ENCODE measurements at regions of chr7 and their contacts with region 1.

Region 1: DNA sequence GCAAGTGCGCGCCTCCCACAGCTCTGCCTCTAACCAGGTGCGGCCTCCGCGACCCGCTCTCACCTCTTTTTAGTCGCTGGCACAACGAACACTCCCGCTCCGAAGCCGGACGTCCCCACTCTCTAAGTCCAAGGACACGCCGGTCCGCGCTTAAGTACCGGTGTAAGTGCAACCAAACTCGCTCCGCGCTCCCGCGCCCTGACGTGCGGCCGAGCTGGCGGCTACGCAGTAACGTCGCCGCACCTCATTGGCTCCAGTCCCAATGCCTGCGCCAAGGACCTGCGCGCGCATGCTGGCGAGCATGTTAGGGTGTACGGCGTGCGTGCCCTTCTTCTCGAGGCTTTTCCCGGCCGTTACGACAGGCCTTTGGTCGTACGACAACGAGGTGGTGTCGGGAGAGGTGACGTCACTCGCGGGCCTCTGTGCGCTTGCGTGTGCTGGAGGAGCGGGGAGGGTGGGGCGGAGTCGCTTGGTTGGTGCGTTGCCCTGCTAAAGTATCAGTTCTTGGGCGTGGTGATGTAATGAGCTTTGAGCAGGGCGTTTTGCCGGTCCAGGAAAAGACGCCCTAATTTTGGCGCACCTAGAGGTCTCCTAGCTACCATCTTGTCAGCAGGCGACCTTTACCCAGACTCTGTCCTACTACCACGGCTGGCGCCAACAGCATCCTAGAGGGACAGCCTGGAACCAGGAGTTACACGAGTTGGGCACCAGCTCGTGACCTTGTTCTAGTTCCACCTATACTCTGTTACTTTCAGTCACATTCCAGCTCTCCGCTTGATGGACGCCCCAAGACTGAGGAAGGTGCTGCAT is at the start of gene CYCS:
- DNase-seq: peak; percentile 100
- H3K4me3 ChIP-seq: peak within 1 kb of the TSS; percentile 82 to 98 (median 91)
- H3K27ac ChIP-seq: peak within 1 kb of the TSS; percentile 67
- H3K4me1 ChIP-seq: peaks cover 9% of the 10 kb centered on the region
- H3K27me3 ChIP-seq: peaks cover 0 to 3% of the 10 kb centered on the region in 2 experiments
- CTCF ChIP-seq: no peak
- POLR2A ChIP-seq: peak; percentile 98
- total RNA-seq, gene CYCS: 134 and 143 TPM in 2 replicates

Region 2: GRCh38 chr7:25158966-25159365 is 33.6 kb after region 1 on chr7:
- CTCF ChIA-PET with region 1: interaction called, 4 read pairs
- POLR2A ChIA-PET with region 1: no interaction called
- dilution Hi-C with region 1: no loop called
- intact Hi-C with region 1: loop called (anchors 1 kb)
- DNase-seq: no peak
- H3K4me3 ChIP-seq: no peak overlapping the region
- H3K27ac ChIP-seq: no peak overlapping the region
- H3K4me1 ChIP-seq: no peaks in the 10 kb centered on the region
- H3K27me3 ChIP-seq: no peaks in the 10 kb centered on the region
- CTCF ChIP-seq: no peak
- POLR2A ChIP-seq: no peak

Region 3: DNA sequence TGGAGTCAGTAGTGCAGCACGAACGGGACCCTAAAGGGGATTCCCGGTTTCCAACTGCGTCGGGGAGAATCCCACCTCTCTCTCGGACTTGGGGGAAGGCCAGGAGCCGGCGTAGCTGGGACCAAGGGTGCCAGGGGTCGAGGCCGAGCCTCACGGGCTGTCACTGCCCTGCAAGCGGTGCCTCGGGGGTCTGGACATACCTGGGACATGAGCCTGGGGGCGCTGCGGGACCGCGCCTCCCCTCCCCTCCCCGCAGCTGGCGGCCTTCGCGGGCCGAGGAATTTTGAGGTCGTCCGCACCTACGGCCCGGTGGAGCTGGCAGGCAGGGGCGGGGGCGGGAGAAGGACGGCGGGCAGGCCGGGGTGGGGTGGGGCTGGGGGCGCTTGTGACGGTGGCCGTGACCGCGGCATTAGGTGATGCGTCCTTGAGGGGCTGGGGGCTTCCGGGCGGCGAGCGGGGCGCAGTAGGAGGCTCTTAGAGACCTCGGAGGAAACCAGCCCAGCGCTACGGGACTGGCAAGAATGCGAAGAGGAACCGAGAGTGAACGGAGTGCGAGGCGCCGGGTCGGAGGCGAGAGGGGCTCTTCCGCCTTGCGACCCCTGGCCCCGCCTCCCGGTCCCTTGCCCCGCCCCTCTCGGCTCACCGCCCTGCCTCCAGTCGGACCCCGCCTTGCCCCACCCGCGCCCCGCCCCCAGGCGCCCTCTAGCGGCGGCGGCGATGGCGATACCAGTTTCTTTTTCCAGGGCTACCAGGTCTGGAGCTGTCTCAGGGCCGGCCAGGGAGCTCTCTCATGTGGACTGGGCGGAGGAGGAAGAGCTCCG is 54.6 kb after region 1 on chr7:
- CTCF ChIA-PET with region 1: interaction called, 10 read pairs
- POLR2A ChIA-PET with region 1: interaction called, 3 read pairs
- dilution Hi-C with region 1: no loop called
- intact Hi-C with region 1: loop called (anchors 1 kb)
- DNase-seq: peak; percentile 83
- H3K4me3 ChIP-seq: peak overlapping the region; percentile 46 to 62 (median 56)
- H3K27ac ChIP-seq: no peak overlapping the region
- H3K4me1 ChIP-seq: peaks cover 8% of the 10 kb centered on the region
- H3K27me3 ChIP-seq: peaks cover 1 to 7% of the 10 kb centered on the region in 2 experiments
- CTCF ChIP-seq: peak; percentile 51 to 82
- POLR2A ChIP-seq: no peak